ENCODE measurements at regions of chr20 and their contacts with region 1.

Region 1: GRCh38 chr20:42530822-42531448 is 658.8 kb downstream of the PTPRT start:
- DNase-seq: peak; percentile 2 to 27 (median 20)
- H3K4me3 ChIP-seq: no peak overlapping the region
- H3K4me3 Mint-ChIP-seq: no peak overlapping the region
- H3K27ac ChIP-seq: no peak overlapping the region
- H3K27ac Mint-ChIP-seq: no peak overlapping the region
- H3K4me1 ChIP-seq: peaks cover 13 to 15% of the 10 kb centered on the region in 2 donors
- H3K4me1 Mint-ChIP-seq: peaks cover 13% of the 10 kb centered on the region
- H3K27me3 ChIP-seq: no peaks in the 10 kb centered on the region
- H3K27me3 Mint-ChIP-seq: peaks cover 0 to 10% (median 2%) of the 10 kb centered on the region in 3 donors
- CTCF ChIP-seq: peak; percentile 72

Region 2: GRCh38 chr20:41738604-41739206 is 792.2 kb before region 1 on chr20:
- intact Hi-C with region 1: loop called in 1 of 2 experiments (anchors 5 kb)
- DNase-seq: peak in 2 of 3 donors; percentile 1 to 21
- H3K4me3 ChIP-seq: no peak overlapping the region
- H3K4me3 Mint-ChIP-seq: no peak overlapping the region
- H3K27ac ChIP-seq: no peak overlapping the region
- H3K27ac Mint-ChIP-seq: no peak overlapping the region
- H3K4me1 ChIP-seq: no peaks in the 10 kb centered on the region
- H3K4me1 Mint-ChIP-seq: no peaks in the 10 kb centered on the region
- H3K27me3 ChIP-seq: no peaks in the 10 kb centered on the region
- H3K27me3 Mint-ChIP-seq: peaks cover 2 to 5% (median 2%) of the 10 kb centered on the region in 3 donors
- CTCF ChIP-seq: peak; percentile 66

Region 3: GRCh38 chr20:42204203-42204942 is 326.6 kb before region 1 on chr20:
- intact Hi-C with region 1: loop called in 1 of 2 experiments (anchors 10 kb)
- DNase-seq: no peak
- H3K4me3 ChIP-seq: no peak overlapping the region
- H3K4me3 Mint-ChIP-seq: no peak overlapping the region
- H3K27ac ChIP-seq: no peak overlapping the region
- H3K27ac Mint-ChIP-seq: no peak overlapping the region
- H3K4me1 ChIP-seq: no peaks in the 10 kb centered on the region
- H3K4me1 Mint-ChIP-seq: no peaks in the 10 kb centered on the region
- H3K27me3 ChIP-seq: no peaks in the 10 kb centered on the region
- H3K27me3 Mint-ChIP-seq: peaks cover 0 to 1% (median 1%) of the 10 kb centered on the region in 3 donors
- CTCF ChIP-seq: no peak

Region 4: DNA sequence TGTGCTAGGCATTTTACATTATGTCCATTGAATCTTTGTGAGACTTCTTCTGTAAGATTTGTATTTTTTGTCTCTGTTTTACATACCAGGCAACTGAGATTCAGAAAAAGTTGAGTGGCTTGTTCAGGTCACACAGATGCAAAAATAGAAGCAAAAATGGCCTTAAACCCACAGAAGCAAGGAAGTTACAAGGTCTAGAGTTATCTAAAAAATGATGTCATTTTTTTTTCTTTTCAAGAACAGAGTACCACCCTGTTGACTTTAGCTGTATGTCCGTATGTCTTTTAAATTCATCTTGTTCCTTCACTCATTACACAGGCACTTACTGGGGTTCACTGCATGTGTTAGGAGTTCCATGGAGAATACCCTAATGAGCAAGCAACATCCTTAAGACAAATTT is 301.3 kb before region 1 on chr20:
- intact Hi-C with region 1: no loop called
- DNase-seq: no peak
- H3K4me3 ChIP-seq: no peak overlapping the region
- H3K4me3 Mint-ChIP-seq: no peak overlapping the region
- H3K27ac ChIP-seq: no peak overlapping the region
- H3K27ac Mint-ChIP-seq: no peak overlapping the region
- H3K4me1 ChIP-seq: no peaks in the 10 kb centered on the region
- H3K4me1 Mint-ChIP-seq: no peaks in the 10 kb centered on the region
- H3K27me3 ChIP-seq: no peaks in the 10 kb centered on the region
- H3K27me3 Mint-ChIP-seq: peaks cover 1 to 3% (median 2%) of the 10 kb centered on the region in 3 donors
- CTCF ChIP-seq: no peak

Region 5: DNA sequence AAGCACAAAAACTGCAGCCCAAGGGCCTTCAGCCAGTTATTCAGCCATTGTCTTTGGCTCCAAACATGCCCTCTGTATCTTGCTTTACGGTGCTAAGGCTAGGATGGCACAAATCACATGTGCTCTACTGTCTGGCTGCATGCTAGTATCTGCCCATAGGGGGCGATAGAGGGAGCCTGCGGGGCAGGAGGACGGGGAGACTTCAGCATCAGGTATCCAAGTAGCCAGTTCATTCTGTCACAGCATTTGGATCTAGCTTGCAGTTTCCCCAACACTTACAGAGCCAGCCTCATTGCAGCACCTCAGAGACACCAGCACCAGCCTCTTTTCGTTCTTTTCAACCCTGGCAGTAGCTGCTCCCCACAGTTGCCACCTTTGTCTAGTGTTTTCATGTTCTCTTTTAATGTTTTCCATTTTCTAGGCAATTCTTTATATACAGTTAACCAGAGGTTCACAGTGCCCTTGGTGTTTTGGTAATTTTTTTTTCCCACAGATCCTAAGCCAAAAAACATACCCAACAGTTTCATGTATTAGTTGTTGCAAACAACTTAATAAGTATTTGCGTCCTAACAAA is 47.1 kb before region 1 on chr20:
- intact Hi-C with region 1: no loop called
- DNase-seq: peak in 2 of 3 donors; percentile 8 to 35
- H3K4me3 ChIP-seq: peak overlapping the region in 1 of 3 experiments; percentile 66
- H3K4me3 Mint-ChIP-seq: no peak overlapping the region
- H3K27ac ChIP-seq: no peak overlapping the region
- H3K27ac Mint-ChIP-seq: peak overlapping the region in 1 of 7 donors; percentile 18
- H3K4me1 ChIP-seq: peaks cover 34 to 35% of the 10 kb centered on the region in 2 donors
- H3K4me1 Mint-ChIP-seq: peaks cover 32% of the 10 kb centered on the region
- H3K27me3 ChIP-seq: peaks cover 0 to under 1% of the 10 kb centered on the region in 2 donors
- H3K27me3 Mint-ChIP-seq: peaks cover 4 to 10% (median 5%) of the 10 kb centered on the region in 3 donors
- CTCF ChIP-seq: peak; percentile 46

Region 6: DNA sequence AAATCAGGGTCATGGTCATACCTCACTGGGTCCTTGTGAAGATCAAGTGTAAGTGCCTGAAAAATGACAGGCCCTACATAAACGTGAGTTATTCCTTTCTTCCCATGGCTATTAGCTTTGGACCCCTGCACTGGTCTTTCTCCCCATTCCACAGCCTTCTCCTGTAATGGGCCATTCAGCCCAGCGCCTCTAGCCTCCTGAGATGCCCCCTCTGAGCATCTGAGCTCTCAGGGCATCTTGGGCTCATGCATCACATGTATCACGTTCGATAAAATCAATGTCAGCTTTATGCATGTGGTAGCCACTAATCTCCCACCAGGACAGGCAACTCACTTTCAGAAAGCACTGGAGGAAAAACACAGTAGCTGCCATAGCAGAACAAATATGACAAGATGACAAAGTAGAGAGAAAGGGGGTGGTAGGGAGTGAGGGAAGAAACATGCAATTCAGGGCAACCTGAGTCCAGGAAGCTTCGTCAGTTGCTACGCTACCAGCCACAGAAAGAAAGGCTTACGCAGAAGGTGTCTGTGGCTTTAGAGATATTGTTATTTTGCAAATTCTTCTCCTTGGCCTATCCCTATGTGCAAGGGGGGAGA is 160.0 kb after region 1 on chr20:
- intact Hi-C with region 1: no loop called
- DNase-seq: no peak
- H3K4me3 ChIP-seq: no peak overlapping the region
- H3K4me3 Mint-ChIP-seq: no peak overlapping the region
- H3K27ac ChIP-seq: no peak overlapping the region
- H3K27ac Mint-ChIP-seq: peak overlapping the region in 1 of 7 donors; percentile 7
- H3K4me1 ChIP-seq: no peaks in the 10 kb centered on the region
- H3K4me1 Mint-ChIP-seq: no peaks in the 10 kb centered on the region
- H3K27me3 ChIP-seq: no peaks in the 10 kb centered on the region
- H3K27me3 Mint-ChIP-seq: peaks cover 0 to 2% (median 0%) of the 10 kb centered on the region in 3 donors
- CTCF ChIP-seq: no peak

Measured in CD14-positive monocyte (primary cell).